Astrocyte of the cerebellum (primary cell): ENCODE measurements at regions of chr11 and their contacts with region 1.

Region 1: DNA sequence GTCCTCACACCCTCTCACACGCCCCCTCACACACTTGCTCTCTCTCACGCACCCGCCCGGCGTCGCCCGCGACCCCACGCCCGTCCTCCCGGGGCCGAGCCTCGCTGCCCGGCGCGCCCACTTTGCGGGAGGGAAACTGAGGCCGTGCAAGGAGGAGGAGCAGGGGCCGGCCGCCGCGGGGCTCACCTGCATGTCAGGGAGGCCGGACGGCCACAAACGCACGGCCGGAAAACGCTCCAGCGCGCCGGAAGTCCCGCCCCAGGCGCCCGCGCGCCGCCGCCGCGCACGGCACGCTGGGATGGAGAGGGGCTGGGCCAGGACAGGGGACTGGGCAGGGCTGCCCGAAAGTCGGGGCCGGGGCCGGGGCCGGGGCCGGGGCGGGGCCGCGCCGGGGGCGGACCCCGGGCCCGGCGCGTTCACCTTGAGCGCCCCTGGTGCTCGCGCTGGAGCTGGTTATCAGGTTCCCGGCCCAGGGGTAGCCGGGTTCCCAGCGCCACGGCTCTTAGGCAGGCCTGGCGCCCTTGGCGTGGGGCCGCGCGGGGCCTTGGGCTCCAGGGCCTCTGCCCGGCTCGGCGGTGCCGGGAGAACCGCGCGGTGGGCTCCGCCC is at the start of gene CHID1:
- DNase-seq: no peak
- H3K4me3 ChIP-seq: peak within 1 kb of the TSS; percentile 85
- CTCF ChIP-seq: no peak

Region 2: GRCh38 chr11:636452-637235 is 274.0 kb before region 1 on chr11:
- in situ Hi-C with region 1: no loop called
- DNase-seq: no peak
- H3K4me3 ChIP-seq: no peak overlapping the region
- CTCF ChIP-seq: no peak

Region 3: GRCh38 chr11:859509-860131 is 51.1 kb before region 1 on chr11:
- in situ Hi-C with region 1: loop called (anchors 5 kb)
- DNase-seq: peak; percentile 47
- H3K4me3 ChIP-seq: no peak overlapping the region
- CTCF ChIP-seq: no peak

Region 4: DNA sequence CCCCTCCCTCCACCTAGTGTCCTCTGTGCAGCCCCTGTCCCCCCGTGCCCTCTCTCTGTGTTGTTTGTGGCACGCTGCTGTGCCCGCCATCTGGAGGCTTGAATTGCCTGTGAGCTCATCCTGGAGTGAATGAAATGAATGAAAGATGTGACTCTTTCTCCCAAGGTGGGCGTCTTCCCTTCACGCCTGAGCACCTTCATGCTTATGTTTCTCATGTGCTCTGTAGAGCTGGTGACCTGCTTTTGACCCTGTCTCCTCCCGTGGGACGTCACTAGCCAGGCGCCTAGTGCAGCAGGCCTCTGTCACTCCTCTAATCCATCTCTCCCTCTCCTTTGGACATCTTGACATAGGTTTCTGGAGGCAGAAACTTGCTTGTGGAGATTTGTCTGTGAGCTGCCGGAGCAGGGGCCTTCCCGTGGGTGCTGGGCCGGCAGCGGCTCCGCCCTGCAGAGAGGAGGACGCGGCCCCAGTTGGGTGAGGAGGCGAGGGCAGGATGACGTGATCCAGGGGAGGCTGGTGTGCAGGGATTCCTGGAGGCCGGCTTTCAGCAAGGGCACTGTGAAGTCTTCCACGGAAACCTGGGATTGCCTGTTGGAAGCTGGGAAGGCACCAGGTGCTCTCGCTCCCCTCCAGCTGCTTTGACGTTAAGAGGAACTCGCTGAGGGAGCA is 85.2 kb after region 1 on chr11:
- in situ Hi-C with region 1: loop called (anchors 5 kb)
- DNase-seq: no peak
- H3K4me3 ChIP-seq: no peak overlapping the region
- CTCF ChIP-seq: no peak